Activated B cell treated with CpG ODN at 0.5 μM for 24 hours (primary cell): ENCODE measurements at regions of chr5 and their contacts with region 1.

Region 1: GRCh38 chr5:100430268-100431195 is 104.6 kb upstream of the FAM174A start:
- DNase-seq: no peak
- ATAC-seq: peak; percentile 34
- H3K4me3 Mint-ChIP-seq: no peak overlapping the region
- H3K27ac Mint-ChIP-seq: no peak overlapping the region
- H3K4me1 Mint-ChIP-seq: no peaks in the 10 kb centered on the region
- H3K27me3 Mint-ChIP-seq: no peaks in the 10 kb centered on the region
- CTCF ChIP-seq: peak; percentile 94

Region 2: DNA sequence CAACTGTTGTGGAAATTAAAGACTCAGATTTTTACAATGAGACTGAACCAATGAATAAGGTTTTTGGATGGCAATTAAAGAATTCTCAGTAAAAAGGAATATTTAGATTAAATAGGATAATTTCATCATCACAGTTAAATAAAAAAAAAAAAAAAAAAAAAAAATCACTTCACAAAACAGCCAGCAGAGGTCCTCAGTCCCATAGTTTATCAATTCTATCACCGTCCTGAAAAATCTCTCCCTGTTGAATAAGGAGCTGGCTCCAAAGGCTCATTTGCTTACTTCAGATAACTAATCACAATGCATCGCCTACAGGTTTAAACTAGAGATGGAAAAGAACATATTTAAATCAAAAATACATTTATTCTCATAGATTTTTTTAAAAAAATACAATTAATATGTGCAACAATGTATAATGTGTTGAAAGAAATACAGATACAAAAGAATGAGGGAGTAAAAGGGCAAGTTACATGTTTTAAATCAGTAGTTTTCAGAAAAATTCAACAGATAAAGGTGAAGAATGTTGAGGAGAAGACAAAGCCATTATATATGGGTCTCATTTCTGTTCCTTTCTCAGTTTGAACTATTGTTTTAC is 1325.9 kb before region 1 on chr5:
- CTCF ChIA-PET with region 1: no interaction called
- POLR2A ChIA-PET with region 1: no interaction called
- intact Hi-C with region 1: loop called (anchors 5 kb)
- DNase-seq: no peak
- ATAC-seq: no peak
- H3K4me3 Mint-ChIP-seq: no peak overlapping the region
- H3K27ac Mint-ChIP-seq: no peak overlapping the region
- H3K4me1 Mint-ChIP-seq: no peaks in the 10 kb centered on the region
- H3K27me3 Mint-ChIP-seq: peaks cover 4% of the 10 kb centered on the region
- CTCF ChIP-seq: no peak

Region 3: GRCh38 chr5:101045689-101046088 is 615.2 kb after region 1 on chr5:
- CTCF ChIA-PET with region 1: interaction called, 7 read pairs
- POLR2A ChIA-PET with region 1: no interaction called
- intact Hi-C with region 1: loop called (anchors 1 kb)
- DNase-seq: no peak
- ATAC-seq: no peak
- H3K4me3 Mint-ChIP-seq: no peak overlapping the region
- H3K27ac Mint-ChIP-seq: no peak overlapping the region
- H3K4me1 Mint-ChIP-seq: no peaks in the 10 kb centered on the region
- H3K27me3 Mint-ChIP-seq: no peaks in the 10 kb centered on the region
- CTCF ChIP-seq: no peak

Region 4: DNA sequence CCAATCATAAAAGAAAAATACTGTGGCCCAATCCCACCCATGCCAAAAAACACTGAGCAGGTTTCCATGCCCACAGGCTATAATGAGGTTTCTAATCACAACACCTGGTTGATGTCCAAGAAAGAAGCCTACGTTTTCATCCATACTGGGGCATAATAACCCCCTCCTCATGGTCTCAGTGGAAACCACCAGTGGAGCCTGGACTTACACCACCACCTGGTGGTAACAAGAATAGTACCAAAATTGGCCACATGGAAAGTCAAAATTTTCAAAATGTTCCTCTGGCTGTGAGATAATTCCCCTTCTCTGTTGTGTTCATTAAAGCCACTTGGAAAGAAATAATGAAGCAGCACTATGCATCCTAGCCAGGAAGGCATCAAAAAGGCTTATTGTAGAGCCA is 1159.9 kb after region 1 on chr5:
- CTCF ChIA-PET with region 1: no interaction called
- POLR2A ChIA-PET with region 1: no interaction called
- intact Hi-C with region 1: loop called (anchors 2 kb)
- DNase-seq: no peak
- ATAC-seq: no peak
- H3K4me3 Mint-ChIP-seq: no peak overlapping the region
- H3K27ac Mint-ChIP-seq: no peak overlapping the region
- H3K4me1 Mint-ChIP-seq: no peaks in the 10 kb centered on the region
- H3K27me3 Mint-ChIP-seq: no peaks in the 10 kb centered on the region
- CTCF ChIP-seq: no peak

Region 5: GRCh38 chr5:101977729-101978345 is 1547.3 kb after region 1 on chr5:
- CTCF ChIA-PET with region 1: no interaction called
- POLR2A ChIA-PET with region 1: no interaction called
- intact Hi-C with region 1: loop called (anchors 2 kb)
- DNase-seq: no peak
- ATAC-seq: no peak
- H3K4me3 Mint-ChIP-seq: no peak overlapping the region
- H3K27ac Mint-ChIP-seq: no peak overlapping the region
- H3K4me1 Mint-ChIP-seq: no peaks in the 10 kb centered on the region
- H3K27me3 Mint-ChIP-seq: no peaks in the 10 kb centered on the region
- CTCF ChIP-seq: no peak

Region 6: DNA sequence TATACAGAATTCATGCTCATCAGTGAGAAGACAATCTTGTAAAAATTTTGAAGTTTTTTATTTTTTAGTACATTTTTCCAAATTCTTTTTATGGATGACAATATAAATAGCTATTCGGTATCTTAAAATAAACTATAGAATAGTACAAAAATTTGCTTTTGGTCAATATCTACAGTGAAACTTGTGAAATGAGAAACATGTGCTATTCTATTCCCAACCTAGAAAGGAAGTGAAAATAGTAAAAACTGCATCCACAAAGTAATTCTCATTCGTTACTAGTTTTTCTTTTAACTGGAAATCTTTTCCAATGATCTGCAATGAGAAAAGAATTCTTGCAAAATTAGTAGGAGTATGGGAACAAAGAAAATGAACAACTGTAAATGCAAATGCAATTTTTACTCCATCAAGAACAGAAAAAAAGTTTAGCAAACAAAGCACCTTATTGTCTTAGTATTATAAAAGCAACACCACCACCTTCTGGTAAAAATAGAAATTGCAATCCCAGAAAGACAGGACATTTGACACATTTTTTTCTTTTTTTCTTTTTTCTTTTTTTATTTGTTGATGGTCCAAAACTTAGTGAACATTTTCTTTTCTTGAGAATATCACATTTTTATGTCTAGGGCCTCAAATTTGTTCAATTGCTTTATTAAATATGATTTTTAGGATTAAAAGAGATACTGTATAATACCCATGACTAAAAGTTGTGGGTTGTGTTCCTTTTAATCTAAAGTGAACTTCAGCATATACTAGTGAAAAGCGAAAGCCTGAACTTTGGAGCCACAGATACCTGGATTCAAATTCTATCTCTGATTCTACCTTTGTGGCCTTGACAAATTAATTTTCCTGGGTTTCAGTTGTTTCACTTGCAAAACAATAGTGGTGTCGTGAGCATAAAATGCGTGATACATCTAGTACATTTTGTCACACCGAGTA is 1793.3 kb after region 1 on chr5:
- CTCF ChIA-PET with region 1: no interaction called
- POLR2A ChIA-PET with region 1: no interaction called
- intact Hi-C with region 1: loop called (anchors 10 kb)
- DNase-seq: no peak
- ATAC-seq: no peak
- H3K4me3 Mint-ChIP-seq: no peak overlapping the region
- H3K27ac Mint-ChIP-seq: no peak overlapping the region
- H3K4me1 Mint-ChIP-seq: no peaks in the 10 kb centered on the region
- H3K27me3 Mint-ChIP-seq: peaks cover 4% of the 10 kb centered on the region
- CTCF ChIP-seq: peak; percentile 86